CD8-positive, alpha-beta T cell (primary cell): ENCODE measurements at regions of chr5 and their contacts with region 1.

Region 1: DNA sequence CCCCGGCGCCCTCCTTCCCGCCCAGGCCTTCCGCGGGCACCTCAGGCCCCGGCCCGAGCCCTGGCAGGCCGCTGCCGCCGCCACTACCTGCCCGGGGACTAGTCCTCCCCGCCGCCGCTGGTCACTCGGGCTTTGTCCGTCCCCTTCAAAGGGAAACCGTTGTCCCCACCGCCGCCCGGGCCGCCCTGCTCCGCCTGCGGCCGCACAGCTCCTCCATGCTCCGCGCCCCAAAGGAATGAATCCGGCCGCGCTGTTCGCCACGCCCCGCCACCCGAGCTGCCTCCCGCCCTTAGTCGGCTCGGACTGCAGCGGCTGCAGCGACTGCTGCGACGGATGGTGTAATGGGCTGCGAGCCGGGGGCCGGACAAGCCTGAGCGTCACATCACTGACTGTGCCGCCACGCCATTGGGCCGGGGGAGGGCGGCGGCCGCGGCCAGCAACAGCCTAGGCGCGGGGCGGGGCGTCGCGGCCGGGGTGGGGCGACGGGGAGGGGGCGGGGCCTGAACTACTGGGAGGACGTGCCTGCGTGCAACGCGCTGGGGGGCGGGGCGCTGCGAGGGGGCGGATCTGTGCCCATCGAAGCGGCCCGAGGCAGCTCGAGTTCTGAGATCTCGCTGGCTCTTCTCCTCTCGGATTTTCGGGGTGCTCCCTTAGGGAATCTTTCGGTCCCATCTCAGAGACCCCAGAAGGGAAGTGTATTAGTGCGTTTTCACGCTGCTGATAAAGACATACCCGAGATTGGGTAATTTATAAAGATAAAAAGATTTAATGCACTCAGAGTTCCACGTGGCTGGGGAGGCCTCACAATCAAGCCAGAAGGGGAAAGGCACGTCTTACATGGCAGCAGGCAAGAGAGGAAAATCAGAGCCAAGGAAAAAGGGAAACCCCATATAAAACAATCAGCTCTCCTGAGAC is at the start of gene FEM1C:
- DNase-seq: peak; percentile 93 to 99 (median 97)
- ATAC-seq: peak; percentile 90
- H3K4me3 ChIP-seq: peak within 1 kb of the TSS; percentile 75
- H3K4me3 Mint-ChIP-seq: peak within 1 kb of the TSS; percentile 95
- H3K27ac ChIP-seq: peak within 1 kb of the TSS; percentile 85 to 87
- H3K27ac Mint-ChIP-seq: peak within 1 kb of the TSS; percentile 97
- H3K4me1 ChIP-seq: peaks cover 41% of the 10 kb centered on the region
- H3K4me1 Mint-ChIP-seq: peaks cover 47% of the 10 kb centered on the region
- H3K27me3 ChIP-seq: no peaks in the 10 kb centered on the region
- H3K27me3 Mint-ChIP-seq: no peaks in the 10 kb centered on the region
- CTCF ChIP-seq: no peak
- total RNA-seq, gene FEM1C: 32.7 to 32.9 TPM

Region 2: DNA sequence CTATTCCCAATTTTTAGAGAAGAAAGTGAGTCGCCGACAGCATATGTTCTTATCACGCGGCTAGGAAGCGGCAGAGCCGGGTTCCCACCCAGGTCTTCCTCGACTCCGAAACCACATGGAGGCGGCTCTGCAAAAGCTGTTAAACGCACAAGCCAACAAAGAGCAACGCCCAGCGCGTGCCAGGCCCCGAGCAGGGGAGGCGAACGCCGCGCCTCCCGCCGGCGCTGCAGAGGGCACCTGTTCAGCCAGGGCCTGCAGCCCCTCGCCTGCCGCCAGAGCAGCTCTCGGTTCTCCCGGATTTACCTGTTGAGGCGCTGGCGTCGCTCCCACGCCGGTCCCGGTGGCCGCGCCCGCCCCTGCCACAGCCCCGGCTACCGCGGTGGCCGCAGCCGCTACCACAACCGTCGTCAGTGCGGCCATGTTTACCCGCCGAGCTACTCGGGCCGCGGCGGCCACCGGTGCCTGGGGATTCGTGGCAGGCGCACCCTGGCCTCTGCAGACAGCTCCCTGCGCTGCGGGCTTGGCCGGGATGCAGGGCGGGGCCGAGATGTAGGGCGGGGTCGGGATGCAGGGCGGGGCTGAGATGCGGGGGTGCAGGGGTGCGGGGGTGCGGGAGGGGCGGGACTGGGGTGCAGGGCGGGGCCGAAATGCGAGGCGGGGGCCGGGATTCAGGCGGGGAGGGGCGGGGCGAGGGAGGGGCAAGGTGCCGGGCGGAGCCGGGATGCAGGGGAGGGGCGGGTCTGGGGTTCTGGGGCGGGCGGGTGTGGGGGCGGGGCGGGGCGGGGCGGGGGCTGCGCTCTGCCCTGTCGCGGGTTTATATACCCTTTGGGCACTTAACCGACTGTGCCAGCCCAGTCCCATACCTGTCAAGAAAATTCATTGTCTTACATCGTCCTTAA is 248.3 kb before region 1 on chr5 and contains the start of gene CCDC112:
- CTCF ChIA-PET with region 1: no interaction called
- POLR2A ChIA-PET with region 1: interaction called, 15 read pairs
- intact Hi-C with region 1: loop called (anchors 1 to 2 kb)
- DNase-seq: peak; percentile 45 to 85 (median 70)
- ATAC-seq: peak; percentile 76
- H3K4me3 ChIP-seq: peak within 1 kb of the TSS; percentile 58 to 65
- H3K4me3 Mint-ChIP-seq: peak within 1 kb of the TSS; percentile 78
- H3K27ac ChIP-seq: no peak within 1 kb of the TSS
- H3K27ac Mint-ChIP-seq: no peak within 1 kb of the TSS
- H3K4me1 ChIP-seq: peaks cover 4% of the 10 kb centered on the region
- H3K4me1 Mint-ChIP-seq: peaks cover 12% of the 10 kb centered on the region
- H3K27me3 ChIP-seq: no peaks in the 10 kb centered on the region
- H3K27me3 Mint-ChIP-seq: no peaks in the 10 kb centered on the region
- CTCF ChIP-seq: no peak
- total RNA-seq, gene CCDC112: 1.6 to 2.7 TPM

Region 3: DNA sequence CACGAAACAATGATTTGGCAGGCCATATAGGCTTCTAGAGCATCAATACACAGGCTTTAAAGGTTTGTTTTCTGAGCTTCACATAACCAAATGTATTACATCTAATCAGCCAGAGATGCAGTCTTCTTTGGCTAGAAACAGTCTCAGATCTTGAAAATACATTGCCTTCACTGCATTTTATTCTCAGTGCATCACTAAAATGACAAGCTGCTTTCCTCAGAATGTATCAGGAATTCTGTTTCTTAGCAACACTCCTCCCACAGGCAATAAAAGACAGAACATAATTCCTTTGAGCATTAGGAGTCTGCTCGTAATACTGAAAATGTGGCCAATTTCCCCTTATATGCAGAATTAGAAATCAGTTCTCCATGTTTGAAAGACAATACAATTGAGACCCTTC is 37.0 kb before region 1 on chr5:
- CTCF ChIA-PET with region 1: no interaction called
- POLR2A ChIA-PET with region 1: no interaction called
- intact Hi-C with region 1: no loop called
- DNase-seq: no peak
- ATAC-seq: no peak
- H3K4me3 ChIP-seq: no peak overlapping the region
- H3K4me3 Mint-ChIP-seq: no peak overlapping the region
- H3K27ac ChIP-seq: no peak overlapping the region
- H3K27ac Mint-ChIP-seq: no peak overlapping the region
- H3K4me1 ChIP-seq: no peaks in the 10 kb centered on the region
- H3K4me1 Mint-ChIP-seq: no peaks in the 10 kb centered on the region
- H3K27me3 ChIP-seq: no peaks in the 10 kb centered on the region
- H3K27me3 Mint-ChIP-seq: peaks cover 8% of the 10 kb centered on the region
- CTCF ChIP-seq: no peak

Region 4: DNA sequence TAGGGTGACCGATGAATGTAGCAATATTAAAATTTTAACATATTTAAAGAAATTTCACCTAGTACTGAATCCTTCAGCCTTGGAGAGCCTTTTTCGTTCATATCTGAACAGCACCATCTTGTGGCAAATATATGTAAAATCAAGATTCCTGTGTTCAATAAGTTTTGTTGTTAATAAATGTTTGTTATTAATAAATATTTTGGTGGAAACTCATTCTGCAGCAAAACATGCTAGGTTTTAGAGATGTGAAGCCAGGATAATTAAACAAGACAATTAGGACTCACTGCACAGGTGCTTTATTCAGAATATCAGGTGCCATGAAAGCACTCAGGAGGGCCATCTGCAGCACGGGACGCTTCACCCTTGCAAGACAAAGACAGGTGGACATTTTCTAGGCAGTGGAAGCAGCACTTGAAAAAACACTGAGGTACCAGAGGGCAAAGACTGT is 41.9 kb after region 1 on chr5:
- CTCF ChIA-PET with region 1: interaction called, 7 read pairs
- POLR2A ChIA-PET with region 1: interaction called, 3 read pairs
- intact Hi-C with region 1: loop called in 1 of 2 experiments (anchors 5 kb)
- DNase-seq: peak in 2 of 9 experiments; percentile 29 to 51
- ATAC-seq: peak; percentile 36
- H3K4me3 ChIP-seq: no peak overlapping the region
- H3K4me3 Mint-ChIP-seq: no peak overlapping the region
- H3K27ac ChIP-seq: no peak overlapping the region
- H3K27ac Mint-ChIP-seq: no peak overlapping the region
- H3K4me1 ChIP-seq: no peaks in the 10 kb centered on the region
- H3K4me1 Mint-ChIP-seq: no peaks in the 10 kb centered on the region
- H3K27me3 ChIP-seq: no peaks in the 10 kb centered on the region
- H3K27me3 Mint-ChIP-seq: no peaks in the 10 kb centered on the region
- CTCF ChIP-seq: peak; percentile 63

Region 5: DNA sequence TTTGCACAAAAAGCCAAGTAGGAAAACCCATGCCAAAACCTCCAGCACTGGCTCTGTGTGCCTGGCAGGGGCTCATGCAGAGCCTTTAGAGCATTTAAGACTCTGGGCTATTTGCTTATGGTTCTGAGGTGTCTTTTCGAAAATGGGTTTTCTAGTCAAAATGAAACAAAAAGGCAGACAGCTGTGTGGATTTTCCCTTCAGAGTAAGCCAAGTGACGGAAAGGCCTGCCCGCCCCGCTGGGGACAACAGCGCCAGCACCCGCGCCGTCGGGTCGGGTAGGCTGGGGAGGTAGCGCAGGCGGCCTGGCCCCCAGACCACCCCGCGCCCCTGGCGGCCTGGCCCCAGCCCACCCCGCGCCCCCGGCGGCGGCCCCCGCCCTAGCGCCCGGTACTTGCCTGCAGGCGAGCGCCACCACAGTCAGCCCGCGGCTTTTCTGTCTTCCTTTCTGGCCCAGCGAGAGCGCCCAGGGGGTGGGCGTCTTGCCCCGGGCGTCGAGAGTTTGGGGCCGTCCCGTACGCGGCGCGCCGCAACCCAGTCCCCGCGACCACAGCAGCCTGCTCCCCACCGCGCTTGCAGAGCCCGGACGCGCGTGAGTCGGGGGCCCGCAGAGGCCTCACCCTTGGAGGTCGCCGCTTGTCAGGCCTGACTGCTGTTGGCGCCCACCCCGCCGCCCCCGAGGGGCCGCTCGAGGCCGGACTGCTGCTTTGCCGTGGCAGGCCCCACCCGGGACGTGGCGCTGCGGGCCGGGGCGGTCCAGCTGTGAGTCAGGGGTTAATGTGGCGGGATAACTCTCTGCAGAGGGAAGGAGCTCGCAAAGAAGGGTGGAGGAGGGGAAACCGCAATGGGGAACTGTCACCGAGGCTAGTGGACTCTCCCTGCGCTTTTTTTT is 57.3 kb after region 1 on chr5 and contains the start of gene TICAM2:
- CTCF ChIA-PET with region 1: no interaction called
- POLR2A ChIA-PET with region 1: interaction called, 4 read pairs
- intact Hi-C with region 1: loop called (anchors 1 to 5 kb)
- DNase-seq: peak; percentile 21 to 78 (median 55)
- ATAC-seq: peak; percentile 82
- H3K4me3 ChIP-seq: peak within 1 kb of the TSS; percentile 56 to 59
- H3K4me3 Mint-ChIP-seq: peak within 1 kb of the TSS; percentile 76
- H3K27ac ChIP-seq: peak within 1 kb of the TSS; percentile 46 to 48
- H3K27ac Mint-ChIP-seq: peak within 1 kb of the TSS; percentile 81
- H3K4me1 ChIP-seq: no peaks in the 10 kb centered on the region
- H3K4me1 Mint-ChIP-seq: peaks cover 28% of the 10 kb centered on the region
- H3K27me3 ChIP-seq: no peaks in the 10 kb centered on the region
- H3K27me3 Mint-ChIP-seq: no peaks in the 10 kb centered on the region
- CTCF ChIP-seq: peak; percentile 30
- total RNA-seq, gene TICAM2: 0.27 to 0.36 TPM

Region 6: GRCh38 chr5:115625579-115626444 is 81.1 kb after region 1 on chr5 and contains the start of gene TMED7:
- CTCF ChIA-PET with region 1: interaction called, 5 read pairs
- POLR2A ChIA-PET with region 1: interaction called, 12 read pairs
- intact Hi-C with region 1: loop called (anchors 1 to 2 kb)
- DNase-seq: peak; percentile 99 to 100 (median 100)
- ATAC-seq: peak; percentile 92
- H3K4me3 ChIP-seq: peak within 1 kb of the TSS; percentile 78 to 94
- H3K4me3 Mint-ChIP-seq: no peak within 1 kb of the TSS
- H3K27ac ChIP-seq: peak within 1 kb of the TSS; percentile 91 to 93
- H3K27ac Mint-ChIP-seq: no peak within 1 kb of the TSS
- H3K4me1 ChIP-seq: peaks cover 37% of the 10 kb centered on the region
- H3K4me1 Mint-ChIP-seq: peaks cover 35% of the 10 kb centered on the region
- H3K27me3 ChIP-seq: no peaks in the 10 kb centered on the region
- H3K27me3 Mint-ChIP-seq: no peaks in the 10 kb centered on the region
- CTCF ChIP-seq: no peak
- total RNA-seq, gene TMED7: 67.2 to 71.5 TPM

Region 7: GRCh38 chr5:116084871-116085715 is 540.4 kb after region 1 on chr5 and contains the start of gene COMMD10:
- CTCF ChIA-PET with region 1: no interaction called
- POLR2A ChIA-PET with region 1: interaction called, 6 read pairs
- intact Hi-C with region 1: loop called (anchors 1 to 2 kb)
- DNase-seq: peak; percentile 67 to 97 (median 85)
- ATAC-seq: peak; percentile 93
- H3K4me3 ChIP-seq: peak within 1 kb of the TSS; percentile 45 to 71
- H3K4me3 Mint-ChIP-seq: peak within 1 kb of the TSS; percentile 91
- H3K27ac ChIP-seq: peak within 1 kb of the TSS; percentile 87 to 96
- H3K27ac Mint-ChIP-seq: peak within 1 kb of the TSS; percentile 96
- H3K4me1 ChIP-seq: peaks cover 18% of the 10 kb centered on the region
- H3K4me1 Mint-ChIP-seq: peaks cover 62% of the 10 kb centered on the region
- H3K27me3 ChIP-seq: no peaks in the 10 kb centered on the region
- H3K27me3 Mint-ChIP-seq: no peaks in the 10 kb centered on the region
- CTCF ChIP-seq: no peak
- total RNA-seq, gene COMMD10: 18.0 to 18.8 TPM